IMR-90 (cell line): ENCODE measurements at regions of chr4 and their contacts with region 1.

Region 1: DNA sequence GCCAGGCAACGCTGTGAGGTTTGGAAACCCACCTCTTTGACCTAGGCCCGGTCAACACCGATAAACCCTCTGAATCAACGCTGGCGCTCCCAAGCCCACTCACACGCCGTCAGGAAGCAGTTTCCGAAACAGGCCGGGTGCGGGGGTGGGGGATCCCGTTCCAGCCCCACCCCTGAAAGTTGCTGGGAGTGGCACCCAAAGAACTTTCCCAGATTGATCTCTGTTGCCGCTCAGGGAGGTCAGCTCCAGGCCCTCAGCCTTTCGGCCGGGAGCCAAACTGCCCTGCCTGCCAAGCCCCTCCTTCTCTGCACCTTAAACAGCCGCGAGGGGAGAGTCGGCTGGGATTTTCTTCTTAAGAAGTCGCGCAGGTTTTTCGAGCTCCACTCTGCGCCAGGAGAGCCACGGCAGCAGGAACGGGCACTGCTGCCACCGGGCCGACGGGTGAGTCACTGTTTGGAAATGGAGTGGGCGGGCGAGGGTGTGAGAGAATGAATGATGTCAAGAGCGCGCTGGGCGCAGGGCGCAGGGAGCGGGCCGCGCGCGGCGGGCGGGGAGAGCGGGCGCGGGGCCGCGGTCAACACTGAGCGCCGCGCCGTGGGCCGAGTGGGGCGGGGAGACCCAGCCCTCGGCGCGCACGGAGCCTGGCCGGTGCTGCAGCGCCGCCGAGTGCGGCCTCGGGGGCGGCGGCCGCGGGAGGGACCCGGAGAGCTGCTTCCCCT is at the start of gene SGMS2:
- DNase-seq: peak; percentile 84
- ATAC-seq: peak; percentile 93
- H3K4me3 ChIP-seq: peak within 1 kb of the TSS; percentile 64
- H3K27ac ChIP-seq: peak within 1 kb of the TSS; percentile 32
- H3K4me1 ChIP-seq: peaks cover 2% of the 10 kb centered on the region
- H3K27me3 ChIP-seq: peaks cover 7% of the 10 kb centered on the region
- CTCF ChIP-seq: no peak
- POLR2A ChIP-seq: peak; percentile 83
- RAD21 ChIP-seq: peak; percentile 6; the same call in 1 of the 2 replicates
- total RNA-seq, gene SGMS2: 37.5 and 57.5 TPM in 2 replicates

Region 2: GRCh38 chr4:106898621-106899230 is 925.8 kb before region 1 on chr4:
- CTCF ChIA-PET with region 1: no interaction called
- POLR2A ChIA-PET with region 1: no interaction called
- dilution Hi-C with region 1: no loop called
- in situ Hi-C with region 1: no loop called
- intact Hi-C with region 1: no loop called
- DNase-seq: peak; percentile 53
- ATAC-seq: peak; percentile 60; the same call in 1 of the 2 replicates
- H3K4me3 ChIP-seq: no peak overlapping the region
- H3K27ac ChIP-seq: no peak overlapping the region
- H3K4me1 ChIP-seq: no peaks in the 10 kb centered on the region
- H3K27me3 ChIP-seq: no peaks in the 10 kb centered on the region
- CTCF ChIP-seq: peak; percentile 55
- POLR2A ChIP-seq: no peak
- RAD21 ChIP-seq: peak; percentile 52

Region 3: GRCh38 chr4:107757864-107758476 is 66.5 kb before region 1 on chr4:
- CTCF ChIA-PET with region 1: no interaction called
- POLR2A ChIA-PET with region 1: no interaction called
- dilution Hi-C with region 1: no loop called
- in situ Hi-C with region 1: no loop called
- intact Hi-C with region 1: loop called (anchors 5 kb)
- DNase-seq: peak; percentile 44
- ATAC-seq: peak; percentile 57; the same call in 1 of the 2 replicates
- H3K4me3 ChIP-seq: no peak overlapping the region
- H3K27ac ChIP-seq: no peak overlapping the region
- H3K4me1 ChIP-seq: no peaks in the 10 kb centered on the region
- H3K27me3 ChIP-seq: peaks cover 12% of the 10 kb centered on the region
- CTCF ChIP-seq: peak; percentile 52
- POLR2A ChIP-seq: no peak
- RAD21 ChIP-seq: peak; percentile 50

Region 4: DNA sequence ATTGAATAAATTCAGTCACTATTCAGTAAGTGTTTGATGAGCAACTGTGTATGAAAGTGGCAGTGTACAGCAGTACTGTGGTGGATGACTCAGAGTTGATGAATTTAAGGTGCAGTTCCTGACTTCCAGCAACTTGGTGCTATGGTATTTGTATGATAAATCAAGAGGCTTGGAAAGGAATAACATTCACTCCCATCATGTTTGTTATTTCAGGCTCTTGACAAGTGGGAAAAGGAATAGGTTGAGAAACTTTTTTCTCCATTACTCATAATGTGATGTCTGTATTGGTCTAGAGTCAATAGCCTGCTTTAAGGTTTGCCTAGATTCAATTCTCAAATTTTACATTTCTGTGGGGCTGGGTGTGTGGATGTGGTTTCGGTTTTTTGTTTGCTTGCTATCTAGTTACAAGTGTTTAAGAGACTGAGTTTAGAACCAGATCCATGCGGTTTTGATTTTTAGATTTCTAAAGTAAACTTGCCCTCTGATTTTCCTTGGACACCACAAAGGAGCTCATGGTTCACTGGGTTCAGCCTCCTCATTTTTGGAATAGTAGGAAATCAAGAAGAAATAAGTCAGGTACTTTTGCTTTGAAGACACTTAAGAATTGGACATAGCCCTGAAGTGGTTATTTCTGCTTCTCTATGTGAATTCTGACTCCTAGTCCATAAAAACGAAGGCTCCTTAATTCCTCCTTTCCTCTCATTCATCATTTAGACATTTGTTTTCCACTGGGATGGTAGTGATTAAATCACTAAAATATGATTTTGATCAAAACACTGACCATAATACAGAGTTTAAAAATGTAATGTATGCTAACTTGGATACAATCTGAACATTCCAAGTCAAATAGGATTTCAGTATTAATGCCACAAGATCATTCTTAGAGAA is 71.9 kb after region 1 on chr4:
- CTCF ChIA-PET with region 1: no interaction called
- POLR2A ChIA-PET with region 1: no interaction called
- dilution Hi-C with region 1: no loop called
- in situ Hi-C with region 1: no loop called
- intact Hi-C with region 1: loop called (anchors 2 kb)
- DNase-seq: peak; percentile 97
- ATAC-seq: peak; percentile 88
- H3K4me3 ChIP-seq: no peak overlapping the region; the same call in 1 of the 2 replicates
- H3K27ac ChIP-seq: peak overlapping the region; percentile 51; the same call in 1 of the 2 replicates
- H3K4me1 ChIP-seq: peaks cover 6% of the 10 kb centered on the region
- H3K27me3 ChIP-seq: peaks cover 13% of the 10 kb centered on the region
- CTCF ChIP-seq: no peak
- POLR2A ChIP-seq: no peak
- RAD21 ChIP-seq: no peak